PC-9 (cell line): ENCODE measurements at regions of chr21 and their contacts with region 1.

Region 1: GRCh38 chr21:41612674-41613532 is 104.9 kb upstream of the TMPRSS2 start:
- DNase-seq: peak; percentile 87 to 97
- H3K4me3 ChIP-seq: peak overlapping the region; percentile 18; the same call in 1 of the 2 replicates
- H3K27ac ChIP-seq: peak overlapping the region; percentile 86
- H3K4me1 ChIP-seq: peaks cover 54% of the 10 kb centered on the region
- H3K27me3 ChIP-seq: no peaks in the 10 kb centered on the region
- CTCF ChIP-seq: peak; percentile 83

Region 2: GRCh38 chr21:41477641-41478318 is 135.1 kb before region 1 on chr21:
- CTCF ChIA-PET with region 1: no interaction called
- POLR2A ChIA-PET with region 1: no interaction called
- intact Hi-C with region 1: loop called (anchors 5 kb)
- DNase-seq: peak; percentile 40 to 49
- H3K4me3 ChIP-seq: no peak overlapping the region
- H3K27ac ChIP-seq: peak overlapping the region; percentile 23; the same call in 1 of the 2 replicates
- H3K4me1 ChIP-seq: peaks cover 11% of the 10 kb centered on the region
- H3K27me3 ChIP-seq: no peaks in the 10 kb centered on the region
- CTCF ChIP-seq: no peak

Region 3: DNA sequence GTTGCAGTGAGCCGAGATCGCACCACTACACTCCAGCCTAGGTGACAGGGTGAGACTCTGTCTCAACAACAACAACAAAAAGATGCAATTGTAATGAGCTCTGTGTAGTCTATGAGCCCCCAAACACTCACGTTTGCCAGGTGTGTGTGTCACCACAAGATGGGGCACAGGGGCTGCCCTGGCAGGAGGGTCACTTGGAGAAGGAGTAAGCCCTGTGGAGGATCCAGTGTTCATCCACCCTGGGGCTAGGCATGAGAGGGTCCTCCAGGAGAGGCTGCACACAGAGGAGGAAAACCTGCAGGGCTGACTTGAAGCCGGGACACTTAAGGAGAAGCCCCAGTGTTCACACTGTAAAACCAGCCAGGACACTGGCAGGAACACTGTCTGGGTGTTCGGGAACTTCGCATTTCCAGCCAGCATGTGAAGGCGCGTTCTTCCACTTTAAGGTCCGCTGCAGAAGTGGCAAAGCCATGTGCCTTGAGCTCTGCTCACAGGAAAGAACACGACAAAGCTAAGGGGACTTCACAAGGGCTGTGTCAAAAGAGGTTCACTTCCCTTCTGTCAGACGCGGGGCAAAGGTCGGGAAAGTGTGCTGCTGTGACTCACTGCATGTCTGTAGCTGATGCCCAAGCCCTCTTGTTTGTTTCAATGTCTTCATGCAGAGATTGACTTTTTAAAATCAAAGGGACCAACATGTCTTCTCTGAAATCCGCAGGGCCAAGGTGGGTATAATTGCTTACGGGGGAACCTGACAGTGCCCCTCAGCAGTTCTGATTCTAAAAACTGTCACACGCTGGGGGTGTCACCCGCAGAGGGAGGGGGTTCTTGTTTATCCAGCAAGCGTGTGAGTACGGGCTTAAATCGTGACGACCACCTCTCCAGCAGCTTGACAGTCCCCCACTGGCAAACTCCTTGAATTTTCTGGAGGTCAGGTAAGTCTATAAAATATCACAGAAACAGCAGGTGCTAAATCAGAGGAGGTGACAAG is 51.2 kb after region 1 on chr21:
- CTCF ChIA-PET with region 1: interaction called, 5 read pairs
- POLR2A ChIA-PET with region 1: no interaction called
- intact Hi-C with region 1: loop called (anchors 5 kb)
- DNase-seq: peak in 1 of 2 experiments; percentile 76
- H3K4me3 ChIP-seq: no peak overlapping the region
- H3K27ac ChIP-seq: peak overlapping the region; percentile 68
- H3K4me1 ChIP-seq: peaks cover 59% of the 10 kb centered on the region
- H3K27me3 ChIP-seq: no peaks in the 10 kb centered on the region
- CTCF ChIP-seq: no peak

Region 4: GRCh38 chr21:41768437-41769061 is 155.6 kb after region 1 on chr21:
- CTCF ChIA-PET with region 1: no interaction called
- POLR2A ChIA-PET with region 1: no interaction called
- intact Hi-C with region 1: loop called (anchors 2 kb)
- DNase-seq: peak; percentile 28 to 80
- H3K4me3 ChIP-seq: peak overlapping the region; percentile 100
- H3K27ac ChIP-seq: peak overlapping the region; percentile 99
- H3K4me1 ChIP-seq: peaks cover 12% of the 10 kb centered on the region
- H3K27me3 ChIP-seq: no peaks in the 10 kb centered on the region
- CTCF ChIP-seq: no peak; the same call in 1 of the 2 replicates

Region 5: DNA sequence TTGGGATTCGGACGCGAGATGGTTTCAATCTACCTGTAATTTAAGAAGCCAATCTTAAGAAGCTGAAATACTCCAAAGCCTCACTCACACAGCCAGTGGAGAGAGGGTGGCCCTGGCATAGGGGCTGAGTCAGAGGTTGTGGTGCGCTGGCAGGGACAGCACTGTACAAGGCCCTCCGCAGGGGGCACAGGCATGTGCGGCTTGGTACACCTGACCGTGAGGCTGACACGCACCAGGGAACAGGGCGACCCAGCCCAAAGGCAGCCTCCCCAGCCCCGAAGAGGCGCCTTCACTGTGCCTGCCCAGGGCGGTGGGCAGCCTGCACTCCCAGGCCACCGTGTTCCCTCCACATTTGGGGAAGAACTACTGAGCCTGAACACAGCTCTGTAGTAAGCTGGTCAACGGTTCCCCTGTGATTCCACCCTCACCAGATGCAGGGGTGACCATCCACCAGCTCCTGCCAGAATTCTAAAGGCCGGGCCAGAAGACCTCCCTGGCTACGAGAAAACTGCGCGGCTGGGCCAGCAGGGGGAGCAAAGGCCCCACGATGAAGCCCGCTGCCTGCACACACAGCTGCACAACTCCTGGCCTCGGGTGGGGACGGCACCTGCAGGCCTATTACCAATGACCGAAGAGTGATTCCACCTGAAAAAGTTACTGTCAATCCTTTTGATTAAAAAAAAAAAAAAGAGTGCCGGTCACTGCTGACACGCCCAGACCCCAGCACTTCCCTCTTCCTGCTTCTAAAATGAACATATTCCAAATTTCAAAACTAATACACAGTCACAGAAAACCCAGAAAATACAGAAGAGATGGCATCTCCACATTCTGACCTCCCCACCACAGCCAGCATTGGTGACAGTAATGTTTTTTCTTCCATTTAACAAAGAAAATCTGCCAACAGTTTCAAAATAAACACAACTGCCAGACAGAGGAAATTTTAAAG is 203.6 kb after region 1 on chr21:
- CTCF ChIA-PET with region 1: interaction called, 10 read pairs
- POLR2A ChIA-PET with region 1: no interaction called
- intact Hi-C with region 1: loop called (anchors 1 kb)
- DNase-seq: peak in 1 of 2 experiments; percentile 19
- H3K4me3 ChIP-seq: no peak overlapping the region
- H3K27ac ChIP-seq: peak overlapping the region; percentile 65
- H3K4me1 ChIP-seq: peaks cover 9% of the 10 kb centered on the region
- H3K27me3 ChIP-seq: no peaks in the 10 kb centered on the region
- CTCF ChIP-seq: no peak

Region 6: GRCh38 chr21:42117229-42117966 is 504.5 kb after region 1 on chr21:
- CTCF ChIA-PET with region 1: interaction called, 4 read pairs
- POLR2A ChIA-PET with region 1: no interaction called
- intact Hi-C with region 1: loop called (anchors 1 kb)
- DNase-seq: peak; percentile 47 to 69
- H3K4me3 ChIP-seq: no peak overlapping the region
- H3K27ac ChIP-seq: no peak overlapping the region
- H3K4me1 ChIP-seq: peaks cover 32% of the 10 kb centered on the region
- H3K27me3 ChIP-seq: no peaks in the 10 kb centered on the region
- CTCF ChIP-seq: peak; percentile 89